Pancreas (tissue), 10 donors: ENCODE measurements at regions of chr10 and their contacts with region 1.

Region 1: GRCh38 chr10:101301249-101301711 is 52.7 kb upstream of the BTRC start:
- DNase-seq: peak in 3 of 6 donors; percentile 23 to 37 (median 30)
- ATAC-seq: peak in 3 of 4 donors; percentile 86 to 90 (median 87)
- H3K4me3 ChIP-seq: no peak overlapping the region
- H3K27ac ChIP-seq: no peak overlapping the region
- H3K4me1 ChIP-seq: no peaks in the 10 kb centered on the region
- H3K27me3 ChIP-seq: peaks cover 0 to 4% (median 0%) of the 10 kb centered on the region in 4 donors
- CTCF ChIP-seq: peak in 2 of 4 donors; percentile 5 to 15

Region 2: GRCh38 chr10:101441541-101442455 is 140.5 kb after region 1 on chr10:
- intact Hi-C with region 1: loop called in 1 of 3 experiments (anchors 10 kb)
- DNase-seq: peak in 2 of 6 donors; percentile 7 to 25
- ATAC-seq: peak; percentile 73 to 97 (median 93)
- H3K4me3 ChIP-seq: no peak overlapping the region
- H3K27ac ChIP-seq: no peak overlapping the region
- H3K4me1 ChIP-seq: no peaks in the 10 kb centered on the region
- H3K27me3 ChIP-seq: no peaks in the 10 kb centered on the region
- CTCF ChIP-seq: peak in 1 of 4 donors; percentile 21